Activated naive CD4-positive, alpha-beta T cell treated with anti-CD3 and anti-CD28 coated beads for 36 hours (primary cell): ENCODE measurements at regions of chr3 and their contacts with region 1.

Region 1: GRCh38 chr3:186754006-186754405 is 29.4 kb upstream of the EIF4A2 start:
- DNase-seq: no peak
- H3K4me3 Mint-ChIP-seq: no peak overlapping the region
- H3K27ac Mint-ChIP-seq: no peak overlapping the region
- H3K4me1 Mint-ChIP-seq: peaks cover 12% of the 10 kb centered on the region
- H3K27me3 Mint-ChIP-seq: no peaks in the 10 kb centered on the region

Region 2: GRCh38 chr3:186534113-186534669 is 219.8 kb before region 1 on chr3:
- CTCF ChIA-PET with region 1: no interaction called
- intact Hi-C with region 1: loop called (anchors 1 kb)
- DNase-seq: peak; percentile 76
- H3K4me3 Mint-ChIP-seq: peak overlapping the region; percentile 61
- H3K27ac Mint-ChIP-seq: peak overlapping the region; percentile 97
- H3K4me1 Mint-ChIP-seq: peaks cover 94% of the 10 kb centered on the region
- H3K27me3 Mint-ChIP-seq: no peaks in the 10 kb centered on the region

Region 3: GRCh38 chr3:186772701-186773424 is 18.9 kb after region 1 on chr3:
- CTCF ChIA-PET with region 1: no interaction called
- intact Hi-C with region 1: loop called (anchors 1 kb)
- DNase-seq: peak; percentile 83
- H3K4me3 Mint-ChIP-seq: peak overlapping the region; percentile 95
- H3K27ac Mint-ChIP-seq: peak overlapping the region; percentile 95
- H3K4me1 Mint-ChIP-seq: peaks cover 10% of the 10 kb centered on the region
- H3K27me3 Mint-ChIP-seq: no peaks in the 10 kb centered on the region

Region 4: DNA sequence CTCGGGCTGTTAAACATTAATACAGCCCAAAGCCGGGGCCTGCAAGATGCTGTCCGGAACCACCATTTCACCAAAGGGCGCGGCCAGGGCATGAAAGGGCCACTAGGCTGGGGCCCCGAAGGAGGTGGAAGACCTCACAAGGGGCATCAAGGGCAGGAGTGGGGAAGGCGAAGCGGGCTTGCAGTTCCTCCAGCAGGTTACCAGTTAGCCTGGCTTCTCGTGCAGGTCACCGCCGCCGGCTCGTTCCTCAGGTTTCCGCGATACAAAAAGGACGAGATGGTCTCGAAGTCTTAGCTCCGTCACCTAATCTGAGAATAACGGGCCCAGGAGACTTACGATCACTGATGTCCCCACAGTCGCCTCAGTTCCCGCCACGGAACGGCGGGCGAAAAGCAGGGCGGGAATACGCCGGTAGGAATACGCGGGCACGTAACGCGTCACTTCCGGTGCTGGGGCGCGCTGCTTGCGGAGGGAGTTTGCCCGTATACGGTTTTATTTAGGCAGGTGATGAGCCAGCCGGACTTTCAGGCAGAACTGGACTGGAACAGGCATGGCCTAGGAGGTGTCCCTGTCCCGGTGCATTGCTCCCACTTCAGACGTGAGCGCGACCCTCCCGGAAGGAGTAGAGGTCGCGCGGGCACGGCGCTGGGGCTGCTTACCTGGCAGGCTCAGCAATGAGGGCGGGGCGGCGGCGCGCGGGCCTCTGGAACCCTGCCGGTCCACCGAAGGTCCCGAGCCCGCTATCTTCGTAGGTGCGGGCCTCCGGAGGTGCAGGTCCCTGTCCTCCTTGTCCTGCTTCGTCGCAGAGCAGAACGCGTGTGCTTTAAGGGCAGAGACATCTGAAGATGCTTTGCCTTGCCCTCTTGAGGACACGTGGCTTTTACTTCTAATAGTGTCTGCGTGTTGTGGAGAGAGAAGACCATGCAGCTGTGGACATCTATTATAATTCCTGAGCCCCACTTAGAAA is 52.4 kb after region 1 on chr3 and contains the start of gene RFC4:
- CTCF ChIA-PET with region 1: no interaction called
- intact Hi-C with region 1: loop called (anchors 1 kb)
- DNase-seq: peak; percentile 92
- H3K4me3 Mint-ChIP-seq: peak within 1 kb of the TSS; percentile 91
- H3K27ac Mint-ChIP-seq: peak within 1 kb of the TSS; percentile 94
- H3K4me1 Mint-ChIP-seq: peaks cover 19% of the 10 kb centered on the region
- H3K27me3 Mint-ChIP-seq: no peaks in the 10 kb centered on the region
- total RNA-seq, gene RFC4: 135 to 136 TPM

Region 5: DNA sequence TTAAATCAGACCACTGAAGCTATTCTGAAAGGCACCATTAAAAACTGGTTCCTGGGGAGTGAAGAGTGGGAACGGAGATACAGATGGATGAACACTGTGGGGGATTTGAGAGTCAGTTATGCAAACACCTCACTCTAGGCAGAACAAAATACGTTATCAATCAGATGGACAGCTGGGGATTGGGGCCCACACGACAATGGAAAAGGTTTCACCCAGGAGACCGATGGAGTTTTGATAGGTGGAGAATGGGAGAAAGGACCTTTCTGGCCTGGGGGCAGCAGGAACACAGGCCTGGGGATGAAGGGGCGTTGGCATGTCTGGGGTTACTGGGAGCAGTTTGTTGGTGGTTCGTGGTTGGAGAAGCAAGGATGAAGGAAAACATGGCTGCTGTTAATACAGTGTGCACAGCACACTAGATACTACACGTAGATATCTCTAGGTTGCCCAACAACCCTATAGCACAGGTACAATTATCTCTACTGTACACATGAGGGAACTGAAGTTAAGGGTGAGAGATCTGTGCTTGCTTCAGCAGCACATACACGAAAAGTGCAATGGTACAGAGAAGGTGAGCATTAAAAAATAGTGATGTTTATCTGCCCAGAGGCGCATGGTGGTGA is 192.9 kb after region 1 on chr3:
- CTCF ChIA-PET with region 1: no interaction called
- intact Hi-C with region 1: no loop called
- DNase-seq: no peak
- H3K4me3 Mint-ChIP-seq: no peak overlapping the region
- H3K27ac Mint-ChIP-seq: no peak overlapping the region
- H3K4me1 Mint-ChIP-seq: peaks cover 20% of the 10 kb centered on the region
- H3K27me3 Mint-ChIP-seq: no peaks in the 10 kb centered on the region